ENCODE measurements at regions of chr7 and their contacts with region 1.

Region 1: DNA sequence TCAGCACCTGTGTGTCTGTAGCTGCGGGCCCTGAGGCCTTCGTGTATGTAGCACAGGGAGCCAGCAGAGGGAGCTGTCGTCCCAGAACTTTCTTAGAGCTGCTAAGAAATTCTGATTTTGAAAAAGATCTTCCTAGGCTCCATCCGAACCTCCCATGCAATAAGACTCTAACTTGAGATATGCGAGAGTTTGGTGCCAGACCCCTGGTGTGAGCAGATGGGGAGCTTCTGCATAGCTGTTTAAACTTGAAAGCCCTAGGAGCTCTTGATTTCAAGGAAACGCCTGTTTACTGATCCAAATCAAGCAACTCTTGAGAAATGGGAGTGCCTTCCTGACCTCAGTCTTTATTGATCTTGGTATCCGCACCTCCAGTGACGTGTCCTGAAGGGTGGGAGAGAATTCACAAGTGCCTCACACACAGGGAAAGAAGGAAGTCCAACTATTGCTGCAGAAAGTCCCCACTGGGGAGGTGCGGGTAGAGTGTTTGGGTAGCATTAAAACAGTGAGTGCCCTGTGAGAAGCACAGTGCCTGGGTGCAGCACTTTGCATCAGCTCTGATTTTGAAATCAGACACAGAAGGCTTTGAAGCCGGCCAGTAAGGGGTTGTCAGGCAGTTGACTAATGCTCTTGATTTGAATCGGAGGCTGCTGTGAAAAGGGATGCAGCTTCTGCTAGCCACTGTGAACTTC is 66.4 kb upstream of the STRIP2 start:
- DNase-seq: no peak
- H3K4me3 ChIP-seq: no peak overlapping the region
- H3K27ac ChIP-seq: peak overlapping the region; percentile 3
- H3K27me3 ChIP-seq: no peaks in the 10 kb centered on the region
- CTCF ChIP-seq: peak; percentile 91

Region 2: DNA sequence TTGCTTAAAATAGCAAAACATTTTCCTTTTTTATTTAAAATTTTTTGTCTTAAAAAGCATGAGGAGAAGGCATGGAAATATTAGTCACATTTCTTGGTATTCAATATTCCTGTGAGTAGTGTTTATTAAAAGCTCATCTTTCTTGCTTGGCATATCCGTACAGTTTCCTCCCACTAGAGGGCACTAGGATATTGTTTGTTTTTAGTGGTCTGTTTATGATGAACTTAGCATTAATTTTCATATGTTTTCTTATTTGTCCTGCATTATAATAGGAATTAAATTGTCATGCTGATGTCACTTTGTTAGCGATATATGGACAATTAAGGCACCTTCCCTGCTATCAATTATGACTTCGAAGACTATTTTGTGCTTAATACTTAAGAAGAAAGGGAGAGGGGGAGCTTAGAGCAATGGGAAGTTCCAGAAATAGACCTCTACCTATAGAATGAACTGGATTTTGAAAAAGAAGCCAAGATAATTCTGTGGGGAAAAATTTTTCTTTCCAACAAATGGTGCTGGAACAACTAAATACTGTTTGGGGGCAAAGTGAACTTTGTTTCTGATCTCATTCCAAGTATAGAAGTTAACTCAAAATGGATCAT is 24.6 kb before region 1 on chr7:
- CTCF ChIA-PET with region 1: interaction called, 26 read pairs
- POLR2A ChIA-PET with region 1: no interaction called
- DNase-seq: no peak
- H3K4me3 ChIP-seq: no peak overlapping the region
- H3K27ac ChIP-seq: no peak overlapping the region
- H3K27me3 ChIP-seq: no peaks in the 10 kb centered on the region
- CTCF ChIP-seq: peak; percentile 76

Region 3: GRCh38 chr7:129389829-129390228 is 22.0 kb after region 1 on chr7:
- CTCF ChIA-PET with region 1: interaction called, 30 read pairs
- POLR2A ChIA-PET with region 1: interaction called, 4 read pairs
- DNase-seq: no peak
- H3K4me3 ChIP-seq: no peak overlapping the region
- H3K27ac ChIP-seq: no peak overlapping the region
- H3K27me3 ChIP-seq: no peaks in the 10 kb centered on the region
- CTCF ChIP-seq: 0 out of 2 replicates have a peak, but pooled peaks have one; percentile 4

Region 4: GRCh38 chr7:129401967-129402860 is 34.4 kb after region 1 on chr7:
- CTCF ChIA-PET with region 1: interaction called, 16 read pairs
- POLR2A ChIA-PET with region 1: no interaction called
- DNase-seq: no peak
- H3K4me3 ChIP-seq: no peak overlapping the region
- H3K27ac ChIP-seq: no peak overlapping the region
- H3K27me3 ChIP-seq: no peaks in the 10 kb centered on the region
- CTCF ChIP-seq: no peak

Region 5: GRCh38 chr7:129494041-129494440 is 126.2 kb after region 1 on chr7:
- CTCF ChIA-PET with region 1: no interaction called
- POLR2A ChIA-PET with region 1: no interaction called
- DNase-seq: peak; percentile 83
- H3K4me3 ChIP-seq: no peak overlapping the region
- H3K27ac ChIP-seq: no peak overlapping the region
- H3K27me3 ChIP-seq: peaks cover 2% of the 10 kb centered on the region
- CTCF ChIP-seq: no peak

Region 6: GRCh38 chr7:129635300-129636029 is 267.6 kb after region 1 on chr7:
- CTCF ChIA-PET with region 1: interaction called, 12 read pairs
- POLR2A ChIA-PET with region 1: no interaction called
- DNase-seq: peak; percentile 54
- H3K4me3 ChIP-seq: no peak overlapping the region
- H3K27ac ChIP-seq: no peak overlapping the region
- H3K27me3 ChIP-seq: no peaks in the 10 kb centered on the region
- CTCF ChIP-seq: peak; percentile 97

Region 7: GRCh38 chr7:130010689-130011412 is 643.0 kb after region 1 on chr7:
- CTCF ChIA-PET with region 1: interaction called, 13 read pairs
- POLR2A ChIA-PET with region 1: no interaction called
- DNase-seq: peak; percentile 80
- H3K4me3 ChIP-seq: no peak overlapping the region
- H3K27ac ChIP-seq: peak overlapping the region; percentile 88
- H3K27me3 ChIP-seq: no peaks in the 10 kb centered on the region
- CTCF ChIP-seq: peak; percentile 96

Measured in AG04450 (cell line).